GM10248 (cell line): ENCODE measurements at regions of chr9 and their contacts with region 1.

Region 1: GRCh38 chr9:137029058-137029936 is 1.3 kb upstream of the ABCA2 start:
- DNase-seq: peak; percentile 83
- CTCF ChIP-seq: peak; percentile 98

Region 2: GRCh38 chr9:136784249-136784996 is 244.9 kb before region 1 on chr9:
- CTCF ChIA-PET with region 1: interaction called, 41 read pairs
- POLR2A ChIA-PET with region 1: no interaction called
- DNase-seq: no peak
- CTCF ChIP-seq: peak; percentile 5

Region 3: GRCh38 chr9:136840140-136840687 is 189.1 kb before region 1 on chr9:
- CTCF ChIA-PET with region 1: interaction called, 22 read pairs
- POLR2A ChIA-PET with region 1: no interaction called
- DNase-seq: no peak
- CTCF ChIP-seq: no peak

Region 4: GRCh38 chr9:136975644-136976043 is 53.7 kb before region 1 on chr9:
- CTCF ChIA-PET with region 1: interaction called, 20 read pairs
- POLR2A ChIA-PET with region 1: no interaction called
- DNase-seq: no peak
- CTCF ChIP-seq: peak; percentile 37

Region 5: DNA sequence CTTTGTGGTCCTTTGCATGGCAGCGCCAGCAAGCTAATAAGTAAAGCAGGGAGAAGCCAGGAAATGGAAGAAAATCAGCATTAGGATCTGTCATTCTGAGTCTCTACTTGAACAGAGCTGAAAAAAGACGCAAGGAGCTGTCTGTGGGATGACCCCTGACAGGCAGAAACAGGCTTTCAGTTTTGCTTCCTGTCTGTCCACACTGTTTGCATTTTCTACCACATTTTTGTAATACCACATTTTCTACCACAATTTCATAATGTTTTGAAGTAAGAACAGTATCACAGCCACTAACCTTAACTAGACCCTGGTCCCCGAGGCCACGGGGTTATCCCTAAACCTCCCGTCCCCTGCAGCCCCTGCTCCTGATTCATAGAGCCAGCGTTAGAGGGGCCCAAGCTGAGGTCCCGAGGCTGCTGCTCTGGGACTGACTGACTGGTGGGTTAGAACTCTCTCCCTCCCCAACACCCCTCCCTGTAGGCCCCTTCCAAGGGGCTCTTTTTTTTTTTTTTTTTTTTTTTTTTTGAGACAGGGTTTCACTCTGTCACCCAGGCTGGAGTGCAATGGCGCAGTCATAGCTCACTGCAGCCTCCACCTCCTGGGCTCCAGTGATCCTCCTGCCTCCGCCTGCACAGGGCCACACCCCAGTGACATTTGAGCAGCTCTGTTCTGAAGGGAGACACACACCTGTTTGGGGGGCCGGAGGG is 29.0 kb before region 1 on chr9:
- CTCF ChIA-PET with region 1: interaction called, 41 read pairs
- POLR2A ChIA-PET with region 1: no interaction called
- DNase-seq: peak; percentile 84
- CTCF ChIP-seq: no peak

Region 6: DNA sequence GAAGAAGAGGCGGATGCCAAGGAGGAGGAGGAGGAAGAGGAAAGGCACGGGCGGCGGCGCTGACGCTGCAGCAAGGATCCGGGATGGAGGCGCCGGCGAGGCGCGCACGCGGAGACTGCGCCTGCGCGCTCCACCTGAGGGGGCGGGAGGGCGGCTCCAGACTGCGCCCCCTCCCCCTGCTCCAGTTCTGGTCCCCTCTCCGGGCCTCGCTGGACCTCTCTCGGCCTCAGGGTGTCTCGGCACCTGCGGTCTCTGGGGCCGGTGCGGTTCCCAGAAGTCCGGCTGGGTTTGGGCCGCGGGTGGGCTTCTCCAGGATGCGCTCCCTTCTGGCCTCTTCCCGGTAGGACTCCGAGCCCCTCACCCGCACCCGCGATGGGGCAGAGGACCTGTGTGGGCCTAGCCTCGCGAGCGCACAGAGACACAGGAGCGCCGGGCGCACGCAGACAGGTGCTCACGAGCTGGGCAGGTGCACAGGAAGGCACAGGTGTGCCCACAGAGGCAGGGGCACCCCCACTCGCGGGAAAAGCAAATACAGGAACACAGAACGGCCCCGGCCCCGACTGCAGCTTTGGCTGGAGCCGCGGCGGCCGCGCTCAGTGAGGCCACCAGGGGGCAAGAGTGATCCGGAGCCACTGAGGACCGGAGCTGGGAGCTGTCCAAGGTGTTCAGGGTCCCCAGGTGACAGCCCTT is 16.9 kb after region 1 on chr9 and contains the start of gene NPDC1:
- CTCF ChIA-PET with region 1: interaction called, 68 read pairs
- POLR2A ChIA-PET with region 1: no interaction called
- DNase-seq: peak; percentile 93
- CTCF ChIP-seq: peak; percentile 94

Region 7: GRCh38 chr9:137435980-137436760 is 406.9 kb after region 1 on chr9:
- CTCF ChIA-PET with region 1: no interaction called
- POLR2A ChIA-PET with region 1: no interaction called
- DNase-seq: no peak
- CTCF ChIP-seq: no peak